Prostate gland (tissue), 2 donors: ENCODE measurements at regions of chr10 and their contacts with region 1.

Region 1: GRCh38 chr10:58641095-58641531 is 128.4 kb downstream of the BICC1 start:
- DNase-seq: no peak
- H3K4me3 ChIP-seq: no peak overlapping the region
- H3K27ac ChIP-seq: no peak overlapping the region
- H3K4me1 ChIP-seq: no peaks in the 10 kb centered on the region
- H3K27me3 ChIP-seq: no peaks in the 10 kb centered on the region
- CTCF ChIP-seq: peak in 2 of 4 experiments; percentile 4 to 8
- POLR2A ChIP-seq: no peak

Region 2: GRCh38 chr10:58513188-58514110 is 127.7 kb before region 1 on chr10:
- intact Hi-C with region 1: loop called (anchors 10 kb)
- DNase-seq: peak; percentile 22
- H3K4me3 ChIP-seq: peak overlapping the region; percentile 55 to 68
- H3K27ac ChIP-seq: peak overlapping the region; percentile 73 to 77
- H3K4me1 ChIP-seq: no peaks in the 10 kb centered on the region
- H3K27me3 ChIP-seq: no peaks in the 10 kb centered on the region
- CTCF ChIP-seq: no peak
- POLR2A ChIP-seq: no peak

Region 3: GRCh38 chr10:58886406-58886805 is 245.3 kb after region 1 on chr10:
- intact Hi-C with region 1: loop called (anchors 5 kb)
- DNase-seq: no peak
- H3K4me3 ChIP-seq: no peak overlapping the region
- H3K27ac ChIP-seq: no peak overlapping the region
- H3K4me1 ChIP-seq: no peaks in the 10 kb centered on the region
- H3K27me3 ChIP-seq: no peaks in the 10 kb centered on the region
- CTCF ChIP-seq: no peak
- POLR2A ChIP-seq: no peak

Region 4: DNA sequence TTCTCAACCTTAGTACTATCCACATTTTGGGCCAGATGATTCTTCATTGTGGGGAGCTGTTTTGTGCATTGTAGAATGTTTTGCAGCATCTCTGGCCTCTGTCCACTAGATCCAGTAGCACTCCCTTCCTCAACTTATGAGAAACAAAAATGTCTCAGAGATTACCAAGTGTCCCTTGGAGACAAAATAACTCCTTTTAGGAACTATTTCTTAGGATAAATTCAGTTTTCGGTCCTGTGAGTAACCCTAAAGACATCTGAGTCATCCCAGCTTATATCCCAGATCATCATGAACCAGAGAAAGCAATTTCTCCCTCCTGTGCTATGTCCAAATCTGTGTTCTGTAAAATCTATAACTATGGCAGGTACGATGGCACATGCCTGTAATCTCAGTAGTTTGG is 268.8 kb after region 1 on chr10:
- intact Hi-C with region 1: no loop called
- DNase-seq: no peak
- H3K4me3 ChIP-seq: no peak overlapping the region
- H3K27ac ChIP-seq: no peak overlapping the region
- H3K4me1 ChIP-seq: no peaks in the 10 kb centered on the region
- H3K27me3 ChIP-seq: no peaks in the 10 kb centered on the region
- CTCF ChIP-seq: no peak
- POLR2A ChIP-seq: no peak